ENCODE measurements at regions of chr1 and their contacts with region 1.

Region 1: GRCh38 chr1:89951766-89952604 is 42.9 kb upstream of the ZNF326 start:
- DNase-seq: no peak
- ATAC-seq: no peak
- H3K4me3 ChIP-seq: no peak overlapping the region
- H3K27ac ChIP-seq: no peak overlapping the region
- H3K4me1 ChIP-seq: no peaks in the 10 kb centered on the region
- H3K27me3 ChIP-seq: no peaks in the 10 kb centered on the region
- CTCF ChIP-seq: no peak

Region 2: DNA sequence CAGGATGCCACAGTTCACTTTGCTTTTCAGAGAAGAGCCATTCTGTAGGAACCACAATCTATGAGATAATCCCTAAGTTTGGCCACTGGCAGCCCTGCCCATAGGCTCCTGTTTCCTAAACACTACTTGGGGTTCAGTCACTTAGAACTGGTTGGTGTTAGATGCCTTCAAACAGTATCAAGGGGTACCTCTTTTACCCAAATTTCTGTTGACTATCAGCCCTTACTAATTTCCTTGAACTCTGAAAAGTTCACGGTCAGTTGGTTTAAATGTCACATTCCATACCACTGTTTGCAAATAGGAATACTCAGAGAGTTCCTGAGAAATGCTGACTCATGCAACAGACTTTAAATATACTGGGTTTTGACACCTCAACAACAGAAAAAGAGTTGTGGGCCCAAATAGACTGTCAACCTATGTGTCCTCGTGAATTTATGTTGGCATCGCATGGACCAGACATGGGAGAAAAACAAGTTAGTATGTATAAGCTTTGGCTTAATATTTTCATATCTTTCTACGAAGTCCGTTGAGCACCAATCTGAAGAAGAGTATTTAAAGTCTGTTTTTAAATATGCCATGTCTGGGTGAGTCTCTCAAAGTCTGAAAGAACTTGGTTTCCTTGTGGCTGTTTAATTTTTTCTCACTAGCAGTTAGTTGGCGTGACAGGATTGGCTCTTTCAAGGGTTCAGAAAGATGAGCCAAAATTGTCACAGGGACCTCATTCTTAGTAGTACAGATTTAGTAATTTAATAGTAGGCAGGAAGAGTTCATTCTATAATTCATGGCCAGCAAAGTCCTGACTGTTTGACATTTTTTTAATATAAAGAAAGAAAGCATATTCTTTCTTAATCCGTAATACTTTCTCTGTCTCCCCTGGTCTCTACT is 13.6 kb before region 1 on chr1:
- CTCF ChIA-PET with region 1: no interaction called
- POLR2A ChIA-PET with region 1: no interaction called
- in situ Hi-C with region 1: no loop called
- intact Hi-C with region 1: no loop called
- DNase-seq: no peak
- ATAC-seq: no peak
- H3K4me3 ChIP-seq: no peak overlapping the region
- H3K27ac ChIP-seq: no peak overlapping the region
- H3K4me1 ChIP-seq: no peaks in the 10 kb centered on the region; the same call in 1 of the 2 replicates
- H3K27me3 ChIP-seq: no peaks in the 10 kb centered on the region
- CTCF ChIP-seq: no peak

Region 3: DNA sequence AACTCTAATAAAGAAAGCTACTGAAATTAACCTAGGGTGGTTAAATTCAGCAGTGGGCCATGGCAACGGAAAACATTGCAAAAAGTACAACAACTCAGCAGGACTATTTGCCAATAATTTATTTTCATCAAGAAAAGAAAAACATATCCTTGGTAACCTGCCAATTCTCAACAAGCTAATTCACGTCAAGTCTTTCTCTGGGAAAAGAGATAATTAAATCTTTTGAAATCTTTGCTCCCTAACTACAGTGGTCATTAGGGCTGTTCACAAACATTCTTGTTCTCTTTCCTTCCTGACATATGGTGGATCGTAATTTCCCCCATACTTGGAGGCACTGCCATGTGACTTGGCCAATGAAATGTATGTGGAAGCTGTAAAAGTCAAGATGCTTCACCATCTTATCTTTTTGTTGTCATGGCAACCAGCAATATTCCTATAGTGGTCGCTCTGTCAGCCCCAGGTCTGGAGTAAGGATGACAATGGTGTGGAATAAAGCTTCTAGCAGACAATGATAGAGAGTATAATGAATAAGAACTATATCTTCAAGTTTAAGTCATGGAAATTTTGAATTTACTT is 13.3 kb after region 1 on chr1:
- CTCF ChIA-PET with region 1: no interaction called
- POLR2A ChIA-PET with region 1: no interaction called
- in situ Hi-C with region 1: no loop called
- intact Hi-C with region 1: loop called (anchors 2 kb)
- DNase-seq: no peak
- ATAC-seq: no peak
- H3K4me3 ChIP-seq: no peak overlapping the region
- H3K27ac ChIP-seq: no peak overlapping the region
- H3K4me1 ChIP-seq: no peaks in the 10 kb centered on the region
- H3K27me3 ChIP-seq: no peaks in the 10 kb centered on the region; the same call in 1 of the 2 replicates
- CTCF ChIP-seq: no peak

Measured in Panc1 (cell line).